Cardiac septum (tissue), 1 donor: ENCODE measurements at regions of chr6 and their contacts with region 1.

Region 1: GRCh38 chr6:16244869-16245451 is 6.6 kb downstream of the GMPR start:
- DNase-seq: no peak

Region 2: DNA sequence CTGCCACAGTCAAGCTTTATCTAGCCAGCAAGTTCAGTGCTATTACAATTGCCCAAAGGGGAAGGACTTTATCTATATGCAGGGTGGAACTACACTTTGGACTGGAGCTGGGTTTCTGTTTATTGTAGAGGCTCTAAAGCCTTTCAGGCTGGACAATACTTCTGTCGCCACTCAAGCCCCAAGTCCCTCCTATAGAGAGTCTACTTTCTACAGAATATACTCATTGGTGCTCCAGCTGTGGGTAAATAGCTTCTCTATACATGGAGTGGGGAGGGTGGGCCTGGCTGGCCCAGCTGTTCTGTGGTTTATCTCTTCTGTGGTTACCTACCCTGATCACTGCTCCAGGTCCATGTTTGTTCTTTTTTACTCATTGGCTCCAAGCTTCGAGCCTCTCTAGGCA is 267.9 kb before region 1 on chr6:
- intact Hi-C with region 1: no loop called
- DNase-seq: no peak

Region 3: GRCh38 chr6:16277101-16277981 is 32.4 kb after region 1 on chr6:
- intact Hi-C with region 1: loop called (anchors 1 kb)
- DNase-seq: peak; percentile 91